CD4-positive, alpha-beta memory T cell (primary cell): ENCODE measurements at regions of chr19 and their contacts with region 1.

Region 1: GRCh38 chr19:17470068-17470841 is at the start of gene SLC27A1:
- DNase-seq: peak; percentile 85 to 93 (median 87)
- H3K4me3 ChIP-seq: peak within 1 kb of the TSS; percentile 91 to 93
- H3K4me3 Mint-ChIP-seq: peak within 1 kb of the TSS; percentile 95 to 100 (median 96)
- H3K27ac ChIP-seq: peak within 1 kb of the TSS; percentile 65
- H3K27ac Mint-ChIP-seq: peak within 1 kb of the TSS; percentile 82 to 99 (median 96)
- H3K4me1 ChIP-seq: peaks cover 15% of the 10 kb centered on the region
- H3K4me1 Mint-ChIP-seq: peaks cover 9 to 42% (median 22%) of the 10 kb centered on the region in 4 donors
- H3K27me3 ChIP-seq: no peaks in the 10 kb centered on the region
- H3K27me3 Mint-ChIP-seq: no peaks in the 10 kb centered on the region
- total RNA-seq, gene SLC27A1: 9.2 to 10.1 TPM

Region 2: GRCh38 chr19:17336872-17337722 is 133.2 kb before region 1 on chr19 and contains the start of gene GTPBP3:
- CTCF ChIA-PET with region 1: no interaction called
- POLR2A ChIA-PET with region 1: interaction called, 3 read pairs
- intact Hi-C with region 1: loop called (anchors 1 kb)
- DNase-seq: peak; percentile 93 to 99 (median 97)
- H3K4me3 ChIP-seq: peak within 1 kb of the TSS; percentile 52 to 99
- H3K4me3 Mint-ChIP-seq: peak within 1 kb of the TSS; percentile 90 to 98 (median 94)
- H3K27ac ChIP-seq: peak within 1 kb of the TSS; percentile 84
- H3K27ac Mint-ChIP-seq: peak within 1 kb of the TSS; percentile 90 to 99 (median 97)
- H3K4me1 ChIP-seq: peaks cover 47% of the 10 kb centered on the region
- H3K4me1 Mint-ChIP-seq: peaks cover 18 to 53% (median 32%) of the 10 kb centered on the region in 4 donors
- H3K27me3 ChIP-seq: no peaks in the 10 kb centered on the region
- H3K27me3 Mint-ChIP-seq: no peaks in the 10 kb centered on the region
- total RNA-seq, gene GTPBP3: 53.7 to 58.4 TPM

Region 3: GRCh38 chr19:17390665-17391370 is 79.4 kb before region 1 on chr19:
- CTCF ChIA-PET with region 1: interaction called, 50 read pairs
- POLR2A ChIA-PET with region 1: interaction called, 4 read pairs
- intact Hi-C with region 1: loop called (anchors 1 kb)
- DNase-seq: peak; percentile 83 to 86 (median 83)
- H3K4me3 ChIP-seq: peak overlapping the region; percentile 29 to 63
- H3K4me3 Mint-ChIP-seq: peak overlapping the region; percentile 88 to 94 (median 91)
- H3K27ac ChIP-seq: peak overlapping the region; percentile 34
- H3K27ac Mint-ChIP-seq: peak overlapping the region; percentile 30 to 94 (median 64)
- H3K4me1 ChIP-seq: peaks cover 27% of the 10 kb centered on the region
- H3K4me1 Mint-ChIP-seq: peaks cover 14 to 24% (median 19%) of the 10 kb centered on the region in 4 donors
- H3K27me3 ChIP-seq: no peaks in the 10 kb centered on the region
- H3K27me3 Mint-ChIP-seq: no peaks in the 10 kb centered on the region

Region 4: DNA sequence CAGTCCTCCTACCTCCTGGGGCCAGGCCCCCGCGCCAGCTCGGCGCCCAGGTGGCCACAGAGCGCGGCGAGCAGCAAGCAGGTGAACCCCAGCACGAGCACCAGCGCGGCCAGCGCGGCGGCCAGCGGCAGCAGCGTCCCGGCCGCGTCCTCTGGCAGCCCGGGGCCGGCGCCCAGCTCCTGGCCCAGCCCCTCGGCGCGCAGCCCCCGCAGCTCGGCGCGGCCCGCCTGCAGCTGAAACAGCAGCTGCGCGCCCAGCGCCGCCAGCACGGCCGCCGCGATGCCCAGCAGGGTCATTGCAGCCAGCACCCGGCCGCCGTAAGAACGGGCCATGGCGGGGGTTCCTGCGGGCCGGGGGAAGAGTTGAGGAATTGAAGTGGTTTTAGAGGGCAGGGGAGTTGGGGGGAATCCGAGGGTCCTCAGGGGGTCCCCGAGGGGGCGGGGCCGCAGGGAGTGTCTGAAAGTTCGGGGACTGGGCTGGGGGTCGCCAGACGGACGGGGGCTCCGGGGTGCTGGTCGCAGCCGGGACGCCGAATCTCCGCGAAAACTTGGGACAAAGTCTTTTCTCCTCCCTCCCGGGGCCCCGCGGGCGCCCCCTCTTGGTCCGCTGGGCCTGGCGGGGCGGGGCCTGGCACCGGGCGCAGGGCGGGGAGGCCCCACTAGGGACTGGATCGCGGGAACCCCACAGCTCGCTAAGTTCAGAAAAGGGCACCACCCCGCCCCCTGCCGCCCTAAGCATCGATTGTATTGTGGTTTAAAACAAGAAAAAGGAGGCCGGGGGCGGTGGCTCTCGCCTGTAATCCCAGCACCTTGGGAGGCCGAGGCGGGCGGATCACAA is 21.9 kb before region 1 on chr19 and contains the start of gene TMEM221:
- CTCF ChIA-PET with region 1: interaction called, 12 read pairs
- POLR2A ChIA-PET with region 1: no interaction called
- intact Hi-C with region 1: no loop called
- DNase-seq: peak; percentile 41 to 60 (median 51)
- H3K4me3 ChIP-seq: peak within 1 kb of the TSS in 1 of 2 donors; percentile 32
- H3K4me3 Mint-ChIP-seq: peak within 1 kb of the TSS; percentile 27 to 71 (median 60)
- H3K27ac ChIP-seq: no peak within 1 kb of the TSS
- H3K27ac Mint-ChIP-seq: no peak within 1 kb of the TSS
- H3K4me1 ChIP-seq: peaks cover 11% of the 10 kb centered on the region
- H3K4me1 Mint-ChIP-seq: peaks cover 5 to 15% (median 7%) of the 10 kb centered on the region in 4 donors
- H3K27me3 ChIP-seq: no peaks in the 10 kb centered on the region
- H3K27me3 Mint-ChIP-seq: peaks cover 10 to 13% of the 10 kb centered on the region in 2 donors
- total RNA-seq, gene TMEM221: not detected

Region 5: DNA sequence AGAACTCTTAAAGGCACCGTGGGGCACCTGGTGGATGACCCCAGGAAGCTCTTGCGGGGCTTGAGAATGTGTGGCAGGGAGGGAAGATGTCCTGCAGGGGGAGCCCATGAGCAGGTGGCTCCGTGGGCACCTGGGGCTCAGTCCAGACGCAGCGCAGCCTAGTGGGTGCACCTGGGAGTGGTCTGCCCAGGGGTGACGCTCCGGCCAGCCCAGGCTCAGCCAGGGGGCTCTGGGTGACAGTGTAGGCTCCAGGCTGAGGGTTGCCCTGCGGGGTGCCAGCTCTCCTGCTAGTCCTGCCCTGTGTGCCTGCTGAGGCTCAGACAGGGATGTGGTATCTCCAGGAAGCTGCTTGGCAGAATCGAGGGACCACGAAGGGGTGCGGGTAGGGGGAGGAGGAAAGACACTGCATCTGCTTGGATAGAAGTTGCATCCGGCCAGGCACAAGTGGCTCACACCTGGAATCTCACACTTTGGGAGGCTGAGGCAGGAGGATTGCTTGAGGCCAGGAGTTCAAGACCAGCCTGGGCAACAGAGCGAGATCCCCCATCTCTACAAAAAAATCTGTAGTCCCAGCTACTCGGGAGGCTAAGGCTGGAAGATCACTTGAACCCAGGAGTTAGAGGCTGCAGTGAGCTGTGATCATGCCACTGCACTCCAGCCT is 26.2 kb after region 1 on chr19:
- CTCF ChIA-PET with region 1: interaction called, 10 read pairs
- POLR2A ChIA-PET with region 1: interaction called, 4 read pairs
- intact Hi-C with region 1: no loop called
- DNase-seq: peak; percentile 69 to 77 (median 72)
- H3K4me3 ChIP-seq: no peak overlapping the region
- H3K4me3 Mint-ChIP-seq: peak overlapping the region in 1 of 8 donors; percentile 23
- H3K27ac ChIP-seq: no peak overlapping the region
- H3K27ac Mint-ChIP-seq: peak overlapping the region in 2 of 7 donors; percentile 59 to 76
- H3K4me1 ChIP-seq: peaks cover 15% of the 10 kb centered on the region
- H3K4me1 Mint-ChIP-seq: peaks cover 10 to 21% (median 16%) of the 10 kb centered on the region in 4 donors
- H3K27me3 ChIP-seq: no peaks in the 10 kb centered on the region
- H3K27me3 Mint-ChIP-seq: no peaks in the 10 kb centered on the region

Region 6: GRCh38 chr19:17555480-17555928 is 85.2 kb after region 1 on chr19 and contains the start of gene COLGALT1:
- CTCF ChIA-PET with region 1: interaction called, 3 read pairs
- POLR2A ChIA-PET with region 1: no interaction called
- intact Hi-C with region 1: loop called (anchors 1 kb)
- DNase-seq: peak; percentile 94 to 98 (median 95)
- H3K4me3 ChIP-seq: peak within 1 kb of the TSS; percentile 54 to 80
- H3K4me3 Mint-ChIP-seq: peak within 1 kb of the TSS; percentile 83 to 89 (median 86)
- H3K27ac ChIP-seq: peak within 1 kb of the TSS; percentile 62
- H3K27ac Mint-ChIP-seq: peak within 1 kb of the TSS in 6 of 7 donors; percentile 63 to 92 (median 76)
- H3K4me1 ChIP-seq: peaks cover 18% of the 10 kb centered on the region
- H3K4me1 Mint-ChIP-seq: peaks cover 8 to 25% (median 14%) of the 10 kb centered on the region in 4 donors
- H3K27me3 ChIP-seq: no peaks in the 10 kb centered on the region
- H3K27me3 Mint-ChIP-seq: no peaks in the 10 kb centered on the region
- total RNA-seq, gene COLGALT1: 68.3 to 74.7 TPM

Region 7: DNA sequence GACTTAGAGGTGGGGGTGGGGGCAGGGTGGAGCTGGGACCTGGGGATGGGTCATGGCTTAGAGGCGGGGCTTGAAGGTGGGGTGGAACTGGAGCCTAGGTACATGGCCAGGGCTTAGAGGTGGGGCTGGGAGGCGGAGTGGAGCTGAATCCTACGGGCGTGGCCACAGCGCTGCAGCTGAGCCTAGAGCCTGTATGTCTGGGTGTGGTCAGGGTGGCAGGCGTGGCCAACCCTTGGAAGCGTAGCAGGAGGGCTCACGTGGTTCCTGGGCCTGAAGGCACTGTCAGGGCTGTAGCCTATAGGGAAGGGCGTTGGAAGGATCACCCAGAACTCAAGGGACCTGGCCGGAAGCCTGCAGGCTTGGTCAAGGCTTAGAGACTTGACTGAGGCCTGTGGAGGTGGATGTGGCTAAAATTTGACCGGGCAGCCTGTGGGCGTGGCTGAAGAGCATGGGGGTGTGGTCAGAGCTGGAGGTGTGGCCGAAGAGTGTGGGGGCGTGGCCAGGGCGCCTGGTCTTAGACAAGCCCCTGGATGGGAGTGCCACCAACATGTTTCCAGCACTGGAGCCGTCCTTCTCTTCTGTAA is 109.5 kb after region 1 on chr19:
- CTCF ChIA-PET with region 1: no interaction called
- POLR2A ChIA-PET with region 1: no interaction called
- intact Hi-C with region 1: no loop called
- DNase-seq: peak in 2 of 5 donors; percentile 8 to 11
- H3K4me3 ChIP-seq: no peak overlapping the region
- H3K4me3 Mint-ChIP-seq: no peak overlapping the region
- H3K27ac ChIP-seq: no peak overlapping the region
- H3K27ac Mint-ChIP-seq: peak overlapping the region in 1 of 7 donors; percentile 84
- H3K4me1 ChIP-seq: no peaks in the 10 kb centered on the region
- H3K4me1 Mint-ChIP-seq: peaks cover 0 to 4% (median under 1%) of the 10 kb centered on the region in 4 donors
- H3K27me3 ChIP-seq: no peaks in the 10 kb centered on the region
- H3K27me3 Mint-ChIP-seq: no peaks in the 10 kb centered on the region